Cardiac septum (tissue), 1 donor: ENCODE measurements at regions of chr1 and their contacts with region 1.

Region 1: GRCh38 chr1:117121776-117122697 is 488 bp upstream of the TRIM45 start:
- DNase-seq: peak; percentile 97

Region 2: DNA sequence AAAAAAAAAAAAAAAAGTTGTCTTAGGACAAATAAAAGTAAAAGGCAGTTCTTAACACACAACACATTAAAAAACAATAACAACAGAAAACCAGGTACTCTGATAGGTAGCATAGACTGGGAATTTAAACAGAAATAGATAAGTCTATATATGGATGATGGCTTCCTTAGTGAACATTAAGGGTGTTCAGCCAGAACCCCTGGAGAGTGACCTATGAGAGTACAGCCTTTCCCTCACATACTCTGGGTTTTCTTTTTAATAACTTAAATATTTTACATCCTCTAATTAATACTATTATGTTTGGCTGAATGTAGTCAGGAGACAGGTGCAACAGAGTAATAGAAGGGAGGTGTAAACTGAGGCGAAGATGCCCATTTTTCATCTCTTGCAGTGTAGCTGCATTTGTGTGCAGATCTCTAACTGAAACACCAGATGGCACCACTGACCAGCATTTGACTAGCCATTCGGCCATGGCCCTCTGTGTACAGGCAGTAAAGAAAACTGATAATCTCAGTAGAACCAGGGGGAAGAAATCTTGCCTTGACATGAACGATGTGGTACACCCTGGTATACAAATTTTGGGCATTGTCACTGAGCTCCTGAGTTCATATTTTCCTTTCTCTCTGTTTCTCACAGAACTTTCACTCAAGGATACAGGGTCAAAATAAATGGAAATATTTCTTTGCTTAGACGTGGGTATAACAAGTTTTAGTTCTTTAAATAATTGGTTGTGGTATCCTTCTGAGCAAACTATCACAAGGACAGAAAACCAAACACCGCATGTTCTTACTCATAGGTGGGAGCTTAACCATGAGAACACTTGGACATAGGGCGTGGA is 54.3 kb before region 1 on chr1:
- intact Hi-C with region 1: loop called (anchors 2 kb)
- DNase-seq: no peak

Region 3: DNA sequence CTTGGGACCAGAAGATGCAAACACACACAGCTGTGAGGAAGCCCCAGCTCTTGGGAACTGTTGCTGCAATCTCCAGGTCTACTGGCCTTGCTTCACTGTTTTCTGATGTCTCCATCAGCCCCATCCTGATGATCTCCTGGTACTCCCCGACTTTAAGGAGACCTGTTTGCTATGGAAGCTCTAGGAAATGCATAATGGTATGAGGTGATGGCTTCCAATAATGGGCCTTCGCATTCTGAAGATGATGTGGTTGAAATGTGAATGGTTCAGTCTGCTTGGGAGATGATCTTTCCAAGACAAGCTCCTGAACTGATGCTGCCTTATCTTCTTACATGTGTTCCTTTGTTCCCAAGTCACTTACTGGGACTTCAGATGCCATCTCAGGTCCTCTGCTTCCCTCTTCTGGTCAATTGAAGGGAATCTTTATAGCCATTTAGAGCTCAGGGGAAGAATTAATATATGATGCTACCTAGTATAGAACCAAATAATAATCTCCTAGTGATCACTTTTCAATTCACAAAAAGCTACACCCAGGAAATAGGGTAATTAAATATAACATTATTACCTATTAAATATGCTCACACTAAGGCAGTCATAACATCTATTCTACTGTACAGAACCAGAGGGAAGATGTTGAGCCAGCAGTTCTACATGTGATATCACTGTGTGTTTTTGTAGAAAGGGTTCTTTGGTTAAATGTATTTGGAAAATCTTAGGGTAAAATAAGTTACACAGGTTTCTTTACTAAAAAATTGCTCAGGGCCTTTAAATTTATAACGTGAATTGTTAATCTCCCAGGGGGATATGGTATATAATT is 162.6 kb after region 1 on chr1:
- intact Hi-C with region 1: loop called (anchors 1 kb)
- DNase-seq: no peak

Region 4: GRCh38 chr1:117367047-117368018 is 245.3 kb after region 1 on chr1 and contains the start of gene MAN1A2:
- intact Hi-C with region 1: loop called (anchors 10 kb)
- DNase-seq: peak; percentile 97
- total RNA-seq, gene MAN1A2: 36.3 TPM

Region 5: GRCh38 chr1:117605774-117606648 is 484.0 kb after region 1 on chr1 and contains the start of gene TENT5C:
- intact Hi-C with region 1: loop called (anchors 10 kb)
- DNase-seq: peak; percentile 98
- total RNA-seq, gene TENT5C: 7.4 TPM